ENCODE measurements at regions of chr18 and their contacts with region 1.

Region 1: GRCh38 chr18:2547477-2548087 is 23.7 kb downstream of the METTL4 start:
- DNase-seq: peak; percentile 60
- H3K4me3 ChIP-seq: no peak overlapping the region
- H3K27ac ChIP-seq: no peak overlapping the region
- H3K4me1 ChIP-seq: no peaks in the 10 kb centered on the region
- H3K27me3 ChIP-seq: no peaks in the 10 kb centered on the region
- CTCF ChIP-seq: peak; percentile 6 to 28
- POLR2A ChIP-seq: no peak

Region 2: GRCh38 chr18:1585879-1586488 is 961.6 kb before region 1 on chr18:
- CTCF ChIA-PET with region 1: interaction called, 85 read pairs
- POLR2A ChIA-PET with region 1: no interaction called
- dilution Hi-C with region 1: no loop called
- intact Hi-C with region 1: loop called (anchors 1 kb)
- DNase-seq: peak; percentile 42
- H3K4me3 ChIP-seq: no peak overlapping the region
- H3K27ac ChIP-seq: no peak overlapping the region
- H3K4me1 ChIP-seq: no peaks in the 10 kb centered on the region
- H3K27me3 ChIP-seq: no peaks in the 10 kb centered on the region
- CTCF ChIP-seq: peak in 1 of 2 donors; percentile 23
- POLR2A ChIP-seq: no peak

Region 3: DNA sequence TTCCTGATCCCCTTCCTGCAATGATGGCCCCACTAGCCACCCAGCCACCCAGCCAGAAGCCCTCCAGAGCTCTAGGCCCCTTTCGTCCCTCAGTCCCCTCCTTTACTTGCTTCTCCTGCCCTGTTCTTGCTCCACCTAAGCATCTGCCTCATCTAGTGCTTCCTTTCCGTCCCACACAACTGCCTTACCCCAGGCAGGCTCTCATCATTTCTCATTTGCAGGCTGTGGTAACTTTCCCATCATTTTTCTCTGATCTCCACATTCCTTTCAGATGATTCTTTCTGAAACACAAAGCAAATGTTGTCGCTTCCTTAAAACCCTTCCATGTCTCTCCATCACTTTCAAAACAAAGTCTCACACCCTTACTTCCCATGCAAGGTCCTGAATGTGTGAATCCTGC is 436.1 kb before region 1 on chr18:
- CTCF ChIA-PET with region 1: interaction called, 259 read pairs
- POLR2A ChIA-PET with region 1: no interaction called
- dilution Hi-C with region 1: no loop called
- intact Hi-C with region 1: no loop called
- DNase-seq: no peak
- H3K4me3 ChIP-seq: no peak overlapping the region
- H3K27ac ChIP-seq: no peak overlapping the region
- H3K4me1 ChIP-seq: no peaks in the 10 kb centered on the region
- H3K27me3 ChIP-seq: peaks cover 0 to 4% of the 10 kb centered on the region in 2 experiments
- CTCF ChIP-seq: no peak
- POLR2A ChIP-seq: no peak

Region 4: DNA sequence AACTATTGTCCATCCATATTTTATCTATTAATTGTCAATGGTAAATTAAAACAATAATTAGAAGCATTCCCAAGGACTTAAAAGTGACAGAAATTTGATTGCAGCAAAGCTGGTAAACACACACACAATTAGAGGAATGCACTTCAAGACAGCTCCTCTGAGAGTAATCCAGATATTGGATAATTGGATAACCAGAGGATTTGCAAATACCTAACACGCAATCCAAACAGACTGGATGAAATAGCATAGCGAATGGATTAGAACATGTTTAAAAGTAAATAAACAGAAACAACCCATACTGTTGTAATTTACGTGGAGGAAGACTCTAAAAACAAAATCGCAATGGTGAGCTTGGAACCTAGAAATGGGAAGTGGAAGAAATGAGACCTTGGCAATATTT is 216.1 kb before region 1 on chr18:
- CTCF ChIA-PET with region 1: interaction called, 59 read pairs
- POLR2A ChIA-PET with region 1: no interaction called
- dilution Hi-C with region 1: no loop called
- intact Hi-C with region 1: no loop called
- DNase-seq: no peak
- H3K4me3 ChIP-seq: no peak overlapping the region
- H3K27ac ChIP-seq: no peak overlapping the region
- H3K4me1 ChIP-seq: no peaks in the 10 kb centered on the region
- H3K27me3 ChIP-seq: peaks cover 3 to 7% of the 10 kb centered on the region in 2 experiments
- CTCF ChIP-seq: no peak
- POLR2A ChIP-seq: no peak

Region 5: GRCh38 chr18:2522112-2522511 is 25.5 kb before region 1 on chr18:
- CTCF ChIA-PET with region 1: interaction called, 16 read pairs
- POLR2A ChIA-PET with region 1: no interaction called
- dilution Hi-C with region 1: no loop called
- intact Hi-C with region 1: no loop called
- DNase-seq: no peak
- H3K4me3 ChIP-seq: no peak overlapping the region
- H3K27ac ChIP-seq: no peak overlapping the region
- H3K4me1 ChIP-seq: no peaks in the 10 kb centered on the region
- H3K27me3 ChIP-seq: no peaks in the 10 kb centered on the region
- CTCF ChIP-seq: no peak
- POLR2A ChIP-seq: no peak

Region 6: GRCh38 chr18:2716394-2717326 is 169.1 kb after region 1 on chr18:
- CTCF ChIA-PET with region 1: no interaction called
- POLR2A ChIA-PET with region 1: no interaction called
- dilution Hi-C with region 1: no loop called
- intact Hi-C with region 1: no loop called
- DNase-seq: no peak
- H3K4me3 ChIP-seq: no peak overlapping the region
- H3K27ac ChIP-seq: no peak overlapping the region
- H3K4me1 ChIP-seq: no peaks in the 10 kb centered on the region
- H3K27me3 ChIP-seq: no peaks in the 10 kb centered on the region
- CTCF ChIP-seq: no peak
- POLR2A ChIP-seq: no peak

Region 7: DNA sequence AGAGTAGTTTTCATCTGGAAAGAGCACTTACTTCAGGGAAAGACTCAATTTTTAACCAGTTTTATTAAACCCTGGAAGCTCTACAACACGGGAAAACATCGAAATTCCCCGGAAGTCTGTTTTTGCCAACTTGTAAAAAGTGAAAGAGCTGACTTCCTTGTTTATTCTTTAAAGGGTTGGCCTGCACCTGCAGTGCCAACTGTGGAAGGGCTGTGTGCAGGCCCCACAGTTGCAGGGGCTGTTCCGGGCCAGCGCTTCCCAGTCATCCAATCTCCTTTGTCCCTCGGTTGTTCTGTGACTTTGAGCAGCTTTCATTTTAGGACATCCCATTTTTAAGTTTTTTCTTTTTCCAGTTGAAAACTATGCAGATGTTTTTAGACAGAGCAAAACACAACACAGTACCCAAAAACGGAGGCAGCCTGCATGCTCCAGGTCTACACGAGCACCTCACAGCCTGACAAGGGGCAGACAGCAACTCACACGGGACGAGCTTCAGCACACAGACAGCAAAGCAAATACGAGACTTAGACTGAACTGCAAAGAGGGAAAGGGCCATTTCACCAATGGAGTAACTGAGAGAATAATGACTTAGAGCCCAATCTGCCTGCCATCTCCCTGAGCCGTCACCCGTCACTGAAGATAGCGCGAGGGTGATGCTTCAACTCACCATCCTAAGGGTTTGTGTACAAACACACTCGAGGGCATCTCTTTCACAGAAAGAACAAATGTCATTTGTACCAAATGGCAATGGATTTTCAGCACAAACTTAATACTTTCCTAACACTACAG is 369.9 kb after region 1 on chr18:
- CTCF ChIA-PET with region 1: no interaction called
- POLR2A ChIA-PET with region 1: no interaction called
- dilution Hi-C with region 1: no loop called
- intact Hi-C with region 1: no loop called
- DNase-seq: peak; percentile 56
- H3K4me3 ChIP-seq: no peak overlapping the region
- H3K27ac ChIP-seq: no peak overlapping the region
- H3K4me1 ChIP-seq: peaks cover 18% of the 10 kb centered on the region
- H3K27me3 ChIP-seq: no peaks in the 10 kb centered on the region
- CTCF ChIP-seq: no peak
- POLR2A ChIP-seq: no peak

Region 8: GRCh38 chr18:2985628-2986027 is 438.0 kb after region 1 on chr18:
- CTCF ChIA-PET with region 1: no interaction called
- POLR2A ChIA-PET with region 1: no interaction called
- dilution Hi-C with region 1: no loop called
- intact Hi-C with region 1: no loop called
- DNase-seq: peak; percentile 48
- H3K4me3 ChIP-seq: no peak overlapping the region
- H3K27ac ChIP-seq: no peak overlapping the region
- H3K4me1 ChIP-seq: peaks cover 49% of the 10 kb centered on the region
- H3K27me3 ChIP-seq: no peaks in the 10 kb centered on the region
- CTCF ChIP-seq: peak; percentile 26 to 39
- POLR2A ChIP-seq: no peak

Measured in endothelial cell of umbilical vein (primary cell).